ENCODE measurements at regions of chr22 and their contacts with region 1.

Region 1: GRCh38 chr22:40487663-40488249 is 117.4 kb downstream of the SGSM3 start:
- DNase-seq: no peak
- H3K4me3 ChIP-seq: no peak overlapping the region
- H3K27ac ChIP-seq: peak overlapping the region; percentile 83
- H3K4me1 ChIP-seq: peaks cover 54% of the 10 kb centered on the region
- H3K27me3 ChIP-seq: no peaks in the 10 kb centered on the region
- CTCF ChIP-seq: peak in 2 of 3 experiments; percentile 50 to 81

Region 2: DNA sequence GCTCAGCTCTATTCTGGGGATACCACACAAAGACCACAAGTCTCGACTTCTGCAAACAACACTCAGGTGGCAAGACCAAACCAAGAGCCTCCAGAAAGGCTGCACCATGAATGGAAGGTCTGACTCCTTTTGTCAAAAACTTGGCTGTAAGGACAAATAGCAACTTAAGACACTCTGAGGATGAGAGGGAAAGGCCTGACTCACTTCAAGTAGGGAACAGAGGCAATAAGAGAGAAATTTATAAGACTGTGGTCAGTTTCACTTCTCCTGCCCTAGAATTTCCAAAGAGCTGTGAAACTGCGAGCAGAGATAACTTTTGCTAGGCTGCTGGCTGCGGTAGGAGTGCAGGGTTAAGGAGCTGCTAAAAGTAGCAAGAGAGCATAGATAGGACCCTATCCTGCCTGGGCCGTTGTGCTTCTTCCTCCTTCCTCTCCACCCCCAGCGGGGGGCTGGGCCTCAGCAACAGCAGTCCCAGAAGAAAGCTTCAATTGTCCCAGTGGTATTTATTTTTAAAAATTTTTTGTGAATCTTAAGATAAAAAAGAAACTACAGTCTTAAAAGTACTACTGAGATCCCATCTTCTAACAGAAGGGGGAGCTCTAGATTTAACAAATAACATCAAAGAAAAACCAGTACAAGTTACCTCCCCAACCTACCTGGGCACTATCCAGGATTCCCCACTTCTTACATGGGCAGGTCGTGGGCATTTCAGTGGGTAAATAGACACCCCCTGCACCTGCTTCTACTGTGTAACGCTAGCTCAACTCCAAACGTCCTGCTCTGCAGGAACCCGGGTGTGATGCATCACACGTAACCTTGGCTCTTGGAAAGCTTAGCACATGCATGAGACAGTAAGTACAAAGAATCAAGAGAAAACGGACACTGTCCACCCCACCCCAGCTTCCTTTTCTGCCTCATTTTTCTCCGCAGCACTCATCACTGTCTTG is 51.0 kb before region 1 on chr22:
- dilution Hi-C with region 1: loop called (anchors 5 kb)
- DNase-seq: no peak
- H3K4me3 ChIP-seq: no peak overlapping the region
- H3K27ac ChIP-seq: no peak overlapping the region
- H3K4me1 ChIP-seq: no peaks in the 10 kb centered on the region
- H3K27me3 ChIP-seq: no peaks in the 10 kb centered on the region
- CTCF ChIP-seq: peak; percentile 13 to 57 (median 37)

Region 3: GRCh38 chr22:40449676-40450035 is 38.1 kb before region 1 on chr22:
- dilution Hi-C with region 1: no loop called
- DNase-seq: no peak
- H3K4me3 ChIP-seq: no peak overlapping the region
- H3K27ac ChIP-seq: no peak overlapping the region
- H3K4me1 ChIP-seq: peaks cover 17% of the 10 kb centered on the region
- H3K27me3 ChIP-seq: no peaks in the 10 kb centered on the region
- CTCF ChIP-seq: no peak

Measured in keratinocyte (primary cell).